ENCODE measurements at regions of chr2 and their contacts with region 1.

Region 1: DNA sequence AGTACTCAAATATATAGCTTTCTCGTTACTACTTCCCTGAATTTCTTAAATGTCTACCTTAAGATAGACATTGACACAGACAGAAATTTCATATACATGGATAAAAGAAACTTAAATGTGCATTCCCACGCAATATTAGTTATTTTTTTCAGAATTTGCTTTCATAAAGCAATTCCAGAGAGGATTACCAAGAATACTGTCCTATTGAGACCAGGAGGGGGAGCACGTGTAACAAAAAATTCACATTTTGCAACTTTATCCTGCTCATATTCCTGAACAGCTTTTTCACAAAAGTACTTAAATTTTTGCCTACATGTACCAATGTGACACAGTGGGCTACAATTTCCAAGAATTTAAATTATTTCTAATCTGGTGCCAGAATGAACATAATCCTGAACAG is 30.7 kb upstream of the ERCC3 start:
- DNase-seq: peak; percentile 34
- H3K4me3 ChIP-seq: no peak overlapping the region
- H3K27ac ChIP-seq: no peak overlapping the region
- H3K27me3 ChIP-seq: no peaks in the 10 kb centered on the region
- CTCF ChIP-seq: peak; percentile 72

Region 2: DNA sequence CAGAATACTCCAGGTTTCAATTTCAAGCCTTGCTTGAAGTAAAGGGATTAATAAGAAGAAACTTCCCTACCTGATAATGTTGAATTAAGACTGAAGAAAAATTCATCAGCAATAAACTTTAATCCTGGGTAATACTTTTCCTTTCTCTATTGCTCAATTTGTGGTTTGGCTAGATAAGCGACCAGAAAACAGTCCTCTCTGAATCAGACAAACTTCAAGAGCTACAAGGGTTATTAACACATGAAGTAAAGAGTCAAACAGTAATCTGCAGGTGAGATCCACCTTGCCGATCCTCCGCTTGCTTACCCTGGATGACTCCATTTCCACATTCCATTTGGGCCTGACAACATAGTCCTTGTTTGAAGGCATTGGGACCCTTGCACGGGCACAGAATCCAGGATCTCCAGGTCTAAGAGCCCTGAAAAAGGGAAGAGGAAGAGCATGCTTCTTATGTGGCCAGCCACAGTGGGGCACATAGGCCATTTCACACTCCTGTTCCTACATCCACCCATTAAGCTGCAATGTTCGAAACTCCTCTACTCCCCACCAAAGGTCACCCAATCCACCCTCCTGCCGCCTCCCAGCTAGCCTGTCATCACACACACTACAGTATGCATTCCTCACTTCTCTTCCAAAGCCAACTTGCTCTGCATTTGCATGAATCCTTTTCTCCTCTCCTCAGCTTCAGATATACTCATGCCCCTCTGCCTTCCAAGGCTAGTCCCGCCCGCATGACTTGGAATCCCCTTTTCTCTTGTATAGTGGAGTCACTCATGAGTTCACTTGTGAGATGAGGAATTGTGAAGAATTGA is 161.8 kb after region 1 on chr2:
- CTCF ChIA-PET with region 1: interaction called, 231 read pairs
- POLR2A ChIA-PET with region 1: no interaction called
- DNase-seq: no peak
- H3K4me3 ChIP-seq: no peak overlapping the region
- H3K27ac ChIP-seq: no peak overlapping the region
- H3K27me3 ChIP-seq: no peaks in the 10 kb centered on the region
- CTCF ChIP-seq: no peak

Measured in AG04450 (cell line).